Mammary epithelial cell (primary cell): ENCODE measurements at regions of chr6 and their contacts with region 1.

Region 1: DNA sequence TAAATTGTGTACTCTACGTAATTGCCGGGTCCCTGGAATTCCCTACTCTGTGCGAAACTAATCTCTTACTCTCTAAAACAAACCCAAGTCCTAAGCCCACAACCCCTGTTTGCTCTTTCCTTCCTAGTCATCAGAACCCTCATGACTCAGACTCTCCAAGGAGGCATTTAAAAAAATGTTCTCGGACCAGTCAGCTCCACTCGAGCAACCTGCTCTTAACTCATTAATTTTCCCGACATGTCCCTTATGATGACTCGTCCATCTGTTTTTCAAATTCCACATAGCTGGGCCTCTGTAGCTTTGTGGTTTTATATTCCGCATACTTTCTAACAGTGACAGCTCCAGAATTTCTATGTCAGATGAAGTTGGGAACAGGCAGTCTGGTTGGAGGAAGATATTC is 2.6 kb upstream of the MUC22 start:
- DNase-seq: peak; percentile 76
- H3K4me3 ChIP-seq: no peak overlapping the region
- H3K27ac ChIP-seq: no peak overlapping the region
- H3K4me1 ChIP-seq: peaks cover 26% of the 10 kb centered on the region
- H3K27me3 ChIP-seq: no peaks in the 10 kb centered on the region
- CTCF ChIP-seq: no peak

Region 2: GRCh38 chr6:30862156-30862875 is 145.4 kb before region 1 on chr6:
- CTCF ChIA-PET with region 1: no interaction called
- dilution Hi-C with region 1: loop called (anchors 5 kb)
- in situ Hi-C with region 1: no loop called
- intact Hi-C with region 1: no loop called
- DNase-seq: no peak
- H3K4me3 ChIP-seq: no peak overlapping the region
- H3K27ac ChIP-seq: no peak overlapping the region
- H3K4me1 ChIP-seq: no peaks in the 10 kb centered on the region
- H3K27me3 ChIP-seq: no peaks in the 10 kb centered on the region
- CTCF ChIP-seq: no peak

Region 3: DNA sequence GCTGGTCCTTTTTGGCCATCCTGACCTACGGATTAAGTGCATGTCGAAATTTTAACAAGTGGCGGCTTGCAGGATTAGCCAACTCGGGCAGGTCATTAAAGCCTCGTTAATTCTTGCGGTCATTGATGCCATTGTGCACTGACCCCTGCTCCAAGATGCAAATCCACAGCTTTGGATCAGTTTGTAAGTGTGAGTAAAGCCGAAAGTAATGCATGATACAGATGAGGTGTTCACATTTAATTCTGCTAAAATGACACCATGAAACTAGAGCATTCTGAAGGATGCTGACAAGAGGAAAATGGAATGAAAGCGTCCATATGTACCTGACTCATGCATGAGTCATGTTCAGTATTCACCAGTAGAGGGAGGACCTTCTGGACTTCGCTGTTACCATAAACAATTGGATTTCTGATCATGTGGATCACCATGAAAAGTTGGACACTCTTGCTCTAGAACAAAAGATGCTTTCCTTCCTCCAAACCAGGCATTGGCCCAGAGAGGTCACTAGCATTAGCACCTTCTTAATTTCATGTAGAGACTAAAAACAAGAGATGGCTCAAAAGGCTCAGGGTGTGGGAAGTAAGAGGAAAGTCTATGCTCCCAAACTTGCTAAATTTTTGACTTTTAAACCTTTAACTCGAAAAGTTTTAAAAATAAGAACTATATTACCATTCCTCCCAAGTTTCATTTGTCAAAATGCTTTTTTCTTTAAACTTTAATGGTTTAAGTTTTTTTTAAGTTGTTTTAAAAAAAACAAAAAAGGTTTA is 50.6 kb after region 1 on chr6:
- CTCF ChIA-PET with region 1: no interaction called
- dilution Hi-C with region 1: no loop called
- in situ Hi-C with region 1: no loop called
- intact Hi-C with region 1: loop called (anchors 2 kb)
- DNase-seq: peak; percentile 99
- H3K4me3 ChIP-seq: no peak overlapping the region
- H3K27ac ChIP-seq: peak overlapping the region; percentile 99
- H3K4me1 ChIP-seq: peaks cover 43% of the 10 kb centered on the region
- H3K27me3 ChIP-seq: no peaks in the 10 kb centered on the region
- CTCF ChIP-seq: peak in 1 of 2 donors; percentile 46